Activated CD4-positive, alpha-beta memory T cell treated with anti-CD3 and anti-CD28 coated beads for 36 hours (primary cell): ENCODE measurements at regions of chr10 and their contacts with region 1.

Region 1: DNA sequence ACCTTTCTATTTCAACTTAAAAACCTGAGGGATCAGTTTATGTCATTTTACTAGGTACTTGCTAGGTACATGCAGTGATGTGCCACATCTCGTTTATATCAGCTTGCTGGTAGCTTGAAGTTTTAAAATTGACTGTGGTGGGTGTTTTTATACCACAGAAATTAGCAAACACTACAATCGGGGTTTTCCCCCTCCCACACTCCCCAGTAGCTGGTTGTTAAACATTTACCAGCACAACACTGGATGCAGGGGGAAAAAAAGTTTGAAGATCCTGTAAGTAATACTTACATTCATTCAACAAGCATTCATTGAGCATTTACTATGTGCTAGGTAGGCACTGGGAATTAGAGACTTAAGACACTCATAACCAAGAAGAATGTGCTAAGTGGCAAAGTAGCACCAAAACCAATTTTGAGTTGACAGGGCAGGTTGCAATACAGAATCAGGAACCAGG is 32.6 kb downstream of the USP6NL start:
- DNase-seq: peak; percentile 68
- H3K4me3 Mint-ChIP-seq: no peak overlapping the region
- H3K27ac Mint-ChIP-seq: no peak overlapping the region
- H3K4me1 Mint-ChIP-seq: peaks cover 33% of the 10 kb centered on the region
- H3K27me3 Mint-ChIP-seq: peaks cover 6% of the 10 kb centered on the region

Region 2: GRCh38 chr10:11539191-11539868 is 39.5 kb before region 1 on chr10:
- CTCF ChIA-PET with region 1: no interaction called
- POLR2A ChIA-PET with region 1: no interaction called
- intact Hi-C with region 1: loop called (anchors 1 kb)
- DNase-seq: no peak
- H3K4me3 Mint-ChIP-seq: no peak overlapping the region
- H3K27ac Mint-ChIP-seq: no peak overlapping the region
- H3K4me1 Mint-ChIP-seq: peaks cover 13% of the 10 kb centered on the region
- H3K27me3 Mint-ChIP-seq: no peaks in the 10 kb centered on the region

Region 3: GRCh38 chr10:11551916-11552602 is 26.8 kb before region 1 on chr10:
- CTCF ChIA-PET with region 1: interaction called, 5 read pairs
- POLR2A ChIA-PET with region 1: interaction called, 4 read pairs
- intact Hi-C with region 1: loop called (anchors 1 kb)
- DNase-seq: no peak
- H3K4me3 Mint-ChIP-seq: no peak overlapping the region
- H3K27ac Mint-ChIP-seq: peak overlapping the region; percentile 58
- H3K4me1 Mint-ChIP-seq: peaks cover 33% of the 10 kb centered on the region
- H3K27me3 Mint-ChIP-seq: peaks cover 1% of the 10 kb centered on the region

Region 4: GRCh38 chr10:11602919-11603523 is 24.2 kb after region 1 on chr10:
- CTCF ChIA-PET with region 1: no interaction called
- POLR2A ChIA-PET with region 1: no interaction called
- intact Hi-C with region 1: loop called (anchors 2 kb)
- DNase-seq: no peak
- H3K4me3 Mint-ChIP-seq: no peak overlapping the region
- H3K27ac Mint-ChIP-seq: no peak overlapping the region
- H3K4me1 Mint-ChIP-seq: peaks cover 42% of the 10 kb centered on the region
- H3K27me3 Mint-ChIP-seq: no peaks in the 10 kb centered on the region

Region 5: GRCh38 chr10:11611248-11612020 is 32.6 kb after region 1 on chr10 and contains the start of gene USP6NL:
- CTCF ChIA-PET with region 1: no interaction called
- POLR2A ChIA-PET with region 1: no interaction called
- intact Hi-C with region 1: loop called (anchors 2 kb)
- DNase-seq: peak; percentile 72
- H3K4me3 Mint-ChIP-seq: peak within 1 kb of the TSS; percentile 83
- H3K27ac Mint-ChIP-seq: peak within 1 kb of the TSS; percentile 70
- H3K4me1 Mint-ChIP-seq: peaks cover 38% of the 10 kb centered on the region
- H3K27me3 Mint-ChIP-seq: peaks cover 2% of the 10 kb centered on the region
- total RNA-seq, gene USP6NL: 3.2 to 3.4 TPM

Region 6: DNA sequence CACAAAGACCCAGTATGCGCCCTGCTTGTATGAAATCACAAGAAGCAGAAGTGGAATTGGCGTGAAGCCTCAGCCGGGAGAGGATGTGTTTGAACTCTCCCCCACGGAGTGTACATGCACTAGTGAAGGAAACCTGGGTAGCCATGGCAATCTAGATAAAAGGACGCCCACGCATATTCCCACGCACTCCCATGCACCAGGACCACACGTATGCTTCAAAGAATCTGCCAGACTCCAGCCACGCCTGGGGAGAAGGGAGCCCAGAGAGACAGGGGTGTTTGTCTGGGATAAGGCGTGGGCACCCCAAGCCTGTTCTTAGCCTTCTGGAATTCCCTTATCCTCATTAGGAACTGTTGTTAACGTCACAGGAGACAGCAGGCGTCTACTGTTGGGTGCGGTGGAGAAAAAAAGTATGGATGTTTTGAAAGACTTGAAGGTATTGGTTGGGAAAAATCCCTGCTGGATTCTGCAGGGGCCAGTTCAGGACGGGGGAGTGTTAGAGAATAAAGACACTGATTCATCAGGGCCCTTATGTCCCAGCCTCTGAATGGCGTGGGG is 134.4 kb after region 1 on chr10:
- CTCF ChIA-PET with region 1: no interaction called
- POLR2A ChIA-PET with region 1: no interaction called
- intact Hi-C with region 1: loop called (anchors 1 kb)
- DNase-seq: no peak
- H3K4me3 Mint-ChIP-seq: no peak overlapping the region
- H3K27ac Mint-ChIP-seq: no peak overlapping the region
- H3K4me1 Mint-ChIP-seq: peaks cover 15% of the 10 kb centered on the region
- H3K27me3 Mint-ChIP-seq: peaks cover 46% of the 10 kb centered on the region